Activated CD4-positive, alpha-beta memory T cell treated with anti-CD3 and anti-CD28 coated beads for 36 hours (primary cell): ENCODE measurements at regions of chr12 and their contacts with region 1.

Region 1: GRCh38 chr12:98516184-98516873 is 939 bp downstream of the TMPO start:
- DNase-seq: peak; percentile 94
- H3K4me3 Mint-ChIP-seq: peak overlapping the region; percentile 96
- H3K27ac Mint-ChIP-seq: peak overlapping the region; percentile 99
- H3K4me1 Mint-ChIP-seq: peaks cover 26% of the 10 kb centered on the region
- H3K27me3 Mint-ChIP-seq: peaks cover 1% of the 10 kb centered on the region

Region 2: DNA sequence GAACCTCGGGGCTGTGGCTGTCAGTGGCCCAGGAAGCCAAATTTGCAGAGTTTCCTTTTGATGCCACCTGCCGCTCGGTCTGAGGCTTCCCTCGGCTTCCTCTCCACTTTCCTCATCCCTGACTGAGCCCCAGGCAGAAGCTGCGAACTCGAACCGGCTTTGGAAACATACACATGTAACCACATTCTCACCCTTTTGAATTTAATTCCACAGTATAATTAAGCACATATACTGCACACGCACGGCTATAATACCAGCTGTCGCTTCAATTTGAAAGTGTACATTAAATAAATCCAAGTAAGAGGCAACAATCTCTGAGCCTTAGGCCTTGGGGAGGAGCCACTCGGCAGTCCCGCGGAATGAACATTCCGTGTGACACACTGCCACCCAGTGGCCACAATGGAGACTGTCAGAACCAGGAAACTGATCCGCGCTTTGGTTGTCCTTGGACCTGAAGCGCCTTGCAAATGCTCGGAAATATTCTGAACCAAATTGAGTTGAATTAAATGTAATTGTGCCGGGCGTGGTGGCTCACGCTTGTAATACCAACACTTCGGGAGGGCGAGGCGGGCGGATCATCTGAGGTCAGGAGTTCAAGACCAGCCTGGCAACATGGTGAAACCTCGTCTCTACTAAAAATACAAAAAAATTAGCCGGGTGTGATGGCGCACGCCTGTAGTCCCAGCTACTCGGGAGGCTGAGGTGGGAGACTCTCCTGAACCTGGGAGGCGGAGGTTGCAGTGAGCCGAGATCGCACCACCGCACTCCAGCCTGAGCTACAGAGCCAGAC is 118.8 kb before region 1 on chr12:
- CTCF ChIA-PET with region 1: no interaction called
- POLR2A ChIA-PET with region 1: interaction called, 5 read pairs
- intact Hi-C with region 1: loop called (anchors 1 kb)
- DNase-seq: peak; percentile 89
- H3K4me3 Mint-ChIP-seq: peak overlapping the region; percentile 71
- H3K27ac Mint-ChIP-seq: peak overlapping the region; percentile 50
- H3K4me1 Mint-ChIP-seq: peaks cover 31% of the 10 kb centered on the region
- H3K27me3 Mint-ChIP-seq: no peaks in the 10 kb centered on the region

Region 3: GRCh38 chr12:98490501-98491453 is 25.6 kb before region 1 on chr12:
- CTCF ChIA-PET with region 1: interaction called, 89 read pairs
- POLR2A ChIA-PET with region 1: interaction called, 10 read pairs
- intact Hi-C with region 1: loop called (anchors 1 kb)
- DNase-seq: peak; percentile 89
- H3K4me3 Mint-ChIP-seq: peak overlapping the region; percentile 55
- H3K27ac Mint-ChIP-seq: peak overlapping the region; percentile 84
- H3K4me1 Mint-ChIP-seq: peaks cover 5% of the 10 kb centered on the region
- H3K27me3 Mint-ChIP-seq: no peaks in the 10 kb centered on the region

Region 4: GRCh38 chr12:98532681-98533304 is 16.5 kb after region 1 on chr12:
- CTCF ChIA-PET with region 1: interaction called, 25 read pairs
- POLR2A ChIA-PET with region 1: interaction called, 4 read pairs
- intact Hi-C with region 1: loop called (anchors 2 kb)
- DNase-seq: no peak
- H3K4me3 Mint-ChIP-seq: no peak overlapping the region
- H3K27ac Mint-ChIP-seq: no peak overlapping the region
- H3K4me1 Mint-ChIP-seq: peaks cover 4% of the 10 kb centered on the region
- H3K27me3 Mint-ChIP-seq: no peaks in the 10 kb centered on the region

Region 5: GRCh38 chr12:98644711-98645402 is 128.5 kb after region 1 on chr12 and contains the starts of genes APAF1 and IKBIP:
- CTCF ChIA-PET with region 1: interaction called, 4 read pairs
- POLR2A ChIA-PET with region 1: interaction called, 5 read pairs
- intact Hi-C with region 1: loop called (anchors 1 kb)
- DNase-seq: peak; percentile 98
- H3K4me3 Mint-ChIP-seq: peak within 1 kb of the TSS; percentile 96
- H3K27ac Mint-ChIP-seq: peak within 1 kb of the TSS; percentile 95
- H3K4me1 Mint-ChIP-seq: peaks cover 28% of the 10 kb centered on the region
- H3K27me3 Mint-ChIP-seq: no peaks in the 10 kb centered on the region
- total RNA-seq, gene APAF1: 19.6 to 20.8 TPM
- total RNA-seq, gene IKBIP: 24.9 to 26.2 TPM

Region 6: GRCh38 chr12:100200463-100201181 is 1684.3 kb after region 1 on chr12 and contains the start of gene ACTR6:
- CTCF ChIA-PET with region 1: no interaction called
- POLR2A ChIA-PET with region 1: no interaction called
- intact Hi-C with region 1: loop called (anchors 5 kb)
- DNase-seq: peak; percentile 98
- H3K4me3 Mint-ChIP-seq: peak within 1 kb of the TSS; percentile 96
- H3K27ac Mint-ChIP-seq: peak within 1 kb of the TSS; percentile 99
- H3K4me1 Mint-ChIP-seq: peaks cover 27% of the 10 kb centered on the region
- H3K27me3 Mint-ChIP-seq: no peaks in the 10 kb centered on the region
- total RNA-seq, gene ACTR6: 58.3 to 60.3 TPM